Activated CD4-positive, alpha-beta T cell treated with anti-CD3 and anti-CD28 coated beads for 36 hours (primary cell): ENCODE measurements at regions of chr11 and their contacts with region 1.

Region 1: GRCh38 chr11:65575568-65576231 is at the start of gene EHBP1L1:
- DNase-seq: peak; percentile 85
- ATAC-seq: peak; percentile 28
- H3K4me3 Mint-ChIP-seq: peak within 1 kb of the TSS; percentile 90
- H3K27ac Mint-ChIP-seq: peak within 1 kb of the TSS; percentile 95
- H3K4me1 Mint-ChIP-seq: peaks cover 49% of the 10 kb centered on the region
- H3K27me3 Mint-ChIP-seq: no peaks in the 10 kb centered on the region
- total RNA-seq, gene EHBP1L1: 88.3 to 98.8 TPM

Region 2: DNA sequence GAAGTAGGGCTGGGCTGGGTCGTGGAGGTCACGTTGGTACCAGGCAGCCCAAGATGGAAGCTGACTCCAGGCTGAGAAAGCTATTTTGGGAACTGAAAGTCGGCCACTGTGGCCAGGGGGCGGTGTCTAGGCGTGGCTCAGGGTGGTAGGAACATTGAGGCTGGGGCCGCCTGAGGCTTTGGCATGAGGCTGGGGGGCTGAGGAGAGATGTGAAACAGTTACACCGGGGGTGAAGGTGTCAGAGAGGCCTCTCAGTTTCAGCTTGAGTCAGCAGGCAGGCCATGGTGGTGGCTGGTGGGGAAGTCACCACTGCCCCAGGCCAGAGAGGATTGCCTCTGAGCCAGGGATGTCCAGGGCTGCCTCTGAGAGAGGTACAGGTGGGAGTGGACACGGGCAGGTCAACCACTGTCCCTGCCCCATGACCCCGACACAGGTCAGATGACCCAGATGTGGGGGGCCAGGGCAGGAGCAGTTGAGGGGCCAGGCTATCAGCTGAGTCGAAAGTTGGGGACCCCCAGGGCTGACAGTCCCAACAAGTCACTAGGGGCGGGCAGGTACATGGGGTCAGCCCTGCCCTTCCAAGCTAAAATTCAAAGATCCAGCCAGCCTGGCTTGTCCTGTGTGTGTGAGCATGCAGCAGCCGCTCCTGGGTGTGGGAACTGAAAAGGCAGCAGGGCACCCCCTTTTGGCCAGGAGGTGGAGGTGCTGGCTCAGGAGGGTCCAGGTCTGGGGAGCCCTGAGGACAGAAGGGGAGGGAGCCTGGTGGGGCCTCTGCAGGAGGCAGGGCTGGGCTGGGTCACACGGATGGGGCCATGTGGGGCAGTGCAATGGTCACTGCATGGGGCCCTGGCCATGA is 12.7 kb after region 1 on chr11:
- CTCF ChIA-PET with region 1: interaction called, 56 read pairs
- POLR2A ChIA-PET with region 1: interaction called, 3 read pairs
- intact Hi-C with region 1: loop called (anchors 1 kb)
- DNase-seq: peak; percentile 88
- ATAC-seq: peak; percentile 86
- H3K4me3 Mint-ChIP-seq: peak overlapping the region; percentile 43
- H3K27ac Mint-ChIP-seq: peak overlapping the region; percentile 90
- H3K4me1 Mint-ChIP-seq: peaks cover 39% of the 10 kb centered on the region
- H3K27me3 Mint-ChIP-seq: no peaks in the 10 kb centered on the region

Region 3: GRCh38 chr11:65593518-65594298 is 18.0 kb after region 1 on chr11:
- CTCF ChIA-PET with region 1: interaction called, 56 read pairs
- POLR2A ChIA-PET with region 1: interaction called, 3 read pairs
- intact Hi-C with region 1: loop called (anchors 1 kb)
- DNase-seq: peak; percentile 66
- ATAC-seq: peak; percentile 39
- H3K4me3 Mint-ChIP-seq: no peak overlapping the region
- H3K27ac Mint-ChIP-seq: no peak overlapping the region
- H3K4me1 Mint-ChIP-seq: peaks cover 17% of the 10 kb centered on the region
- H3K27me3 Mint-ChIP-seq: no peaks in the 10 kb centered on the region

Region 4: GRCh38 chr11:65630215-65630614 is 54.5 kb after region 1 on chr11:
- CTCF ChIA-PET with region 1: no interaction called
- POLR2A ChIA-PET with region 1: no interaction called
- intact Hi-C with region 1: no loop called
- DNase-seq: no peak
- ATAC-seq: no peak
- H3K4me3 Mint-ChIP-seq: no peak overlapping the region
- H3K27ac Mint-ChIP-seq: no peak overlapping the region
- H3K4me1 Mint-ChIP-seq: peaks cover 4% of the 10 kb centered on the region
- H3K27me3 Mint-ChIP-seq: no peaks in the 10 kb centered on the region

Region 5: DNA sequence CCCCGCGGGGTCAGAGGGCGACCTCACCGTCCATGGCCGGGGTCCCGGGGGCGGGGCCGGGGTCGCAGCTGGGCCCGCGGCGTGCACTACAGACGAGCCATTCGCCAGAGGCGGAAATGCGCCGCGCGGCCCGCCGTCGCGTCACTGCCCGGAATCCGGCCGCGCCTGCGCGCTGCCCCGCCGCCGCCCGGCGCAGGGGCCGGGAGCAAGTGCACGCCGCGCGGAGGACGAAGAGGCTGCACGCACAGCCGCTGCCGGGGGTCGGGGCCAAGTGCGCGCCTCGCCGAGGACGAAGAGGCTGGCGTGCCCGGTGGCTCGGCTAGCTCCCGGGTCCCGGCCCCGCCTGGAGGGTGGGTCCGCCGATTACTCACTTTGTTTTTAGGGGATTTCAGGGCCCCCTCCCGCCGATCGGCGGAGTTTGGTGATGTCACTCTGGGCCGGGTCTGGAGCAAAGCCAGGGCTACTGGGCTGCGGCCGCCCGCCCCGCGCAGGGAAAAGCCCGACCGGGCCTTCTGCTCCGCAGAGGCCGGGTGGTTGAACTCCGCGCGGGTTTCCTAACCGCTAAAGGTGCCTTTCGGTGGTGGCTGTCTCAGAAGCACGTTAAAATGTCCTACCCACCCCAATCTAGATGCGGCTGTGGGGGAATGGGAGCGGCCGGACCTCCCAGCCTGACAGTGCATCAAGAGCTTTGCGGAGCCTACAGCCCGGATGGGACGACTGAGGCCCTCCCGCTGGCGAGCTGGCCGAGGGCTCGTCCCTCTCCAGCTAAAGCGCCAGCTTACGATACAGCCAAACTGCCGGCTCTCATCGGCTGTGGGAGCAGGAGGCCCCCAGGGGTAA is 87.3 kb after region 1 on chr11 and contains the start of gene RELA:
- CTCF ChIA-PET with region 1: interaction called, 4 read pairs
- POLR2A ChIA-PET with region 1: interaction called, 3 read pairs
- intact Hi-C with region 1: loop called (anchors 1 to 5 kb)
- DNase-seq: peak; percentile 96
- ATAC-seq: peak; percentile 90
- H3K4me3 Mint-ChIP-seq: peak within 1 kb of the TSS; percentile 88
- H3K27ac Mint-ChIP-seq: peak within 1 kb of the TSS; percentile 97
- H3K4me1 Mint-ChIP-seq: peaks cover 41% of the 10 kb centered on the region
- H3K27me3 Mint-ChIP-seq: no peaks in the 10 kb centered on the region
- total RNA-seq, gene RELA: 76.9 to 109 TPM